Activated CD4-positive, alpha-beta T cell treated with anti-CD3 and anti-CD28 coated beads for 36 hours (primary cell): ENCODE measurements at regions of chr11 and their contacts with region 1.

Region 1: DNA sequence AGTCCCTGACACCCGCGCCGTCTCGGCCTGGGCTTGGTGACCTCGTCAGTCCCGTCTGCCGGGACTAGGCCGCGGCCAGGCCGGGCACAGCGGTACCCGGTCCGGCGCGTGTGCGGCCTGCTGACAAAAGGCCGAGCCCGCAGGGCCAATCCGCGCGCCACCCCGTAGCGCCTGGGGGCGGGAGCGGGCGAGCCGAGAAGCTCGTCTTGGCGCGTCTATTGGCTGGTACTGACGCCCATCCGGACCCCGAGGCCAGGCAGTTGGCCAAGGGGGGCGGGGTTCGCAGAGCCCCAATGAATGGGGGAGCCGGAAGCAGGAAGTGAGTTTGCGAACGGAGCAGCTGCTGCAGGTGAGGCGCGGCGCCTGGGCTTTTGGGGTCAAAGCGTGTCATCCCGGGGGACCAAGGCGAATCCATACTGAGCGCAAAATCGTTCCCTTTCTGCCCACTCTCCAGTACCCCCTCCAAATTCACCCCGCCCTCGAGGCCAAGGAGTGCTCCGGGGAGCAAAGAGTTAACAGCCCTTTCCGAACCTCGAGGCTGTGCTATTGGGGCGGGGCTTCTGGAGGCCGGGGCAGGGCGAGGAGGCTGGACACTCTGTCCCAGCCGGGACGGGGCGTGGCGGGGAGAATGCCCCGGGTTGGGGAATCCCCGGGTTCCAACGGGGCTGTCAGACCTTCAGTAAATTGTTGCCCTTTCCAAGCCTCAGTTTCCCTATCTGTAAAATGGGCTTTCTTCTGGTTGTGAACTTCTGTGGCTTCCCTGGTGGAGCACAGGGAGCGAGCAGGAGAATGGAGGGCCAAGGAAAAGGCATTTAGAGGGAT is at the start of gene DPP3:
- DNase-seq: peak; percentile 98
- ATAC-seq: peak; percentile 98
- H3K4me3 Mint-ChIP-seq: peak within 1 kb of the TSS; percentile 90
- H3K27ac Mint-ChIP-seq: peak within 1 kb of the TSS; percentile 86
- H3K4me1 Mint-ChIP-seq: peaks cover 22% of the 10 kb centered on the region
- H3K27me3 Mint-ChIP-seq: no peaks in the 10 kb centered on the region
- total RNA-seq, gene DPP3: 87.1 to 91.9 TPM

Region 2: DNA sequence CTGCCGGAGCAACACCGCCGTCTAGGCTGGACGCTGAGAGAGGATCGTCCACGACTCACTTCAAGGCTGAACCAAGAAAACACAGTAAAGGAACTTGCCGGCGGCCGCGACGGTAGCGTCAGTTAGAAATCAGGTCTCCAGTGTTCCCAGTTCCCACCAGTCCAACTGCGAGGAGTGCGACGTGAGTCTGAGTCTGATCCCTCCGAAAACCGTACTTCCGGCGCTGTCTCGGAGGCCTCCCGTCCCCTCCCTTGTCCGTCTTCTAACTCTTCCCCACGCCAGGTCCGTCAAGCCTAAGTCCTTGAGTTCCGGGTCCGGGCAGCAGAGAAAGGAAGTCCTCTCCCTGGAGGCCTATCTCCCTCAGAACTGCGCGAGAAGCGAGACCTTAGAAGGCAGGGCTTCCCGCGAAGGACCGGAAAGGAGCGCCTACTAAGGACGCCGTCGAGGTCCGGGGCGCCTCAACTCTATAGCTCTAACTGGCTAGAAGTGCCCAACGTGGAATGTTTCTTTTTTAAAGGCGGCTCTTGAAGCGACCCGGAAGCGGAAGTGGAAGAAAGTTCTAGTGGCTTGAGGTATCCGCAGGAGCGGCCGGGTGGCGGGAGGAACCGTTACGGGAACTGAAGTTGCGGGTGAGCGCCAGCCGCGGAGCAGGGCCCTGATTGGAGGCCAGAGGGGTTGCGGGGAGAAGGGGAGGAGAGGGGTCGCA is 478.2 kb before region 1 on chr11 and contains the starts of genes BANF1 and EIF1AD:
- CTCF ChIA-PET with region 1: no interaction called
- POLR2A ChIA-PET with region 1: no interaction called
- intact Hi-C with region 1: no loop called
- DNase-seq: peak; percentile 95
- ATAC-seq: peak; percentile 88
- H3K4me3 Mint-ChIP-seq: peak within 1 kb of the TSS; percentile 100
- H3K27ac Mint-ChIP-seq: peak within 1 kb of the TSS; percentile 98
- H3K4me1 Mint-ChIP-seq: peaks cover 36% of the 10 kb centered on the region
- H3K27me3 Mint-ChIP-seq: no peaks in the 10 kb centered on the region
- total RNA-seq, gene BANF1: 233 to 293 TPM
- total RNA-seq, gene EIF1AD: 45.1 to 52.2 TPM

Region 3: DNA sequence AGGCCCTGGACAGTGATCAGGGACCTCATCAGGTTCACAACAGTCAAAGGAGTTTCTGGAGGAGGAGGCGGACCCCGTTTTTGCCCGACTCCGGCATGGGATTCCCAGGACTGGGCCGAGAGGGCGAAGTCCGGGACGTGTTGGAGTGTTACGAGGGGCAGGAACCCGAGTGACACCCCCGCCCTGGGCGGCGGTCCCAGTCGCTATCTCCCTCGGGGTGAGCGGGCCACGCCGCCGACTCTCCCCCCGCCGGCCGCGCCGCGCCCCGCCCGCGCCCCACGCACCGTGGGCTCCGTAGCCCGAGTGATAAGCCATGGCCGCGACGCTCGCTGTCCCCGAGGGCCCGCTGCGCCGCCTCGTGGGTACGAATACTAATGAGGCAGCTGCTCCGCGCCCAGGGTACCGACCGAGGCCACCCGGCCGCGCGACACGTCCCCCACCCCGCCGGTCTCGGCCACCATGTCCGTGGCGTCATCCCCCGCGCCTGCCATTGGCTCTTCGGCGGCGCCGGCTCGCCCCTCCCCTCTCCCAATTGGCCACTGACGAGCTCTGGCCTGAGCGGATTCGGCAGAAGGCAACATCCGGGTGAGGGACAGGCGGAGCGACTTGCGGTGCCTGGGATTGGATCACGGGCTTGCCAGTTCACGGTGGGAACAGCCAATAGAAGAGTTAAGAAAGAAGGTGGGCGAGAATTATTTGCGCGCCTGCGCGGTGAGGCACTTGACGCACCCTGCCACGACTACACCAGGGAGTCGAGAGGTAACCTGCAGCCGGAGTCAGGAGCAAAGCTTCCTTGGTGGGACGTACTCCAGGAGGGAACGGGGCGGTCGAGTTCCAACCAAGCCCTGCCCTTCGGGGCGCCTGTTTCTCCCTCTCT is 191.4 kb before region 1 on chr11 and contains the start of gene YIF1A:
- CTCF ChIA-PET with region 1: no interaction called
- POLR2A ChIA-PET with region 1: no interaction called
- intact Hi-C with region 1: loop called in 1 of 2 experiments (anchors 1 kb)
- DNase-seq: peak; percentile 99
- ATAC-seq: peak; percentile 97
- H3K4me3 Mint-ChIP-seq: peak within 1 kb of the TSS; percentile 89
- H3K27ac Mint-ChIP-seq: peak within 1 kb of the TSS; percentile 85
- H3K4me1 Mint-ChIP-seq: peaks cover 22% of the 10 kb centered on the region
- H3K27me3 Mint-ChIP-seq: peaks cover 8% of the 10 kb centered on the region
- total RNA-seq, gene YIF1A: 47.5 to 49.8 TPM

Region 4: DNA sequence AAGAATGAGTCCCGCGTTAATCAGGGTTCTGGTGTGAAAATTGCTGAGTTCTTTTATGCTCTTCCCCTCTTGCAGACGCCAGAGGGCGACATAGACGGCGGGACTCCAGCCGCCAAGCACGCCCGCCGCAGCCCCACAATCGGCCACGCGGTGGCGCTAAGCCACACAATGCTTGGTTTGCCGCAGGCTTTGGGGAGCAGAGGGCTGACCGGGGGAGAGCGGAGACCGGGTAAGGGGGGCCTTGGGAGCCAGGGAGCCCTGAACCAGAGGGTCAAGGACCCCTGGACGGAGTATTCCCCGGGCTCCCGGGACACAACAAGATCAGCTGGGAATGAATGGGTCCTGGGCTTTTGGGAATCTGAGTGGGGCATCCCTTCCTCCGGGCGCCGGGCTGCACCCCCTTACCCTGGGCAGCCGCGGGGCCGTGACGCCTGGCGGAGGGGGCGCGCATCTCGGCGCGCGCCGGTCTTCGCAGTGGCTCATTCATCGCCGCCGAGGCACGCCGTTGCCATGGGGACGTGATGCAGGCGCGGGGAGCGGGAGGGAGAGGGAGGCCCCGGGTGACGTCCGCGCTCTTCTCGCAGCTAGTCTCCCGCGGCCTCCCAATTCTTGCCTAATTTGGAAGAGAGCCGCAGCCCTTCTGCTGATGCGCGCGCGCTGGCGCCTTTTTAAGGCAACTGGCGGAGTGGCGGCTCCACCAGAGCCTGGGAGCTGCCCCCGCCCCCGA is 71.7 kb before region 1 on chr11:
- CTCF ChIA-PET with region 1: interaction called, 5 read pairs
- POLR2A ChIA-PET with region 1: no interaction called
- intact Hi-C with region 1: loop called (anchors 1 kb)
- DNase-seq: peak; percentile 97
- ATAC-seq: peak; percentile 86
- H3K4me3 Mint-ChIP-seq: peak overlapping the region; percentile 67
- H3K27ac Mint-ChIP-seq: no peak overlapping the region
- H3K4me1 Mint-ChIP-seq: peaks cover 2% of the 10 kb centered on the region
- H3K27me3 Mint-ChIP-seq: peaks cover 20% of the 10 kb centered on the region

Region 5: DNA sequence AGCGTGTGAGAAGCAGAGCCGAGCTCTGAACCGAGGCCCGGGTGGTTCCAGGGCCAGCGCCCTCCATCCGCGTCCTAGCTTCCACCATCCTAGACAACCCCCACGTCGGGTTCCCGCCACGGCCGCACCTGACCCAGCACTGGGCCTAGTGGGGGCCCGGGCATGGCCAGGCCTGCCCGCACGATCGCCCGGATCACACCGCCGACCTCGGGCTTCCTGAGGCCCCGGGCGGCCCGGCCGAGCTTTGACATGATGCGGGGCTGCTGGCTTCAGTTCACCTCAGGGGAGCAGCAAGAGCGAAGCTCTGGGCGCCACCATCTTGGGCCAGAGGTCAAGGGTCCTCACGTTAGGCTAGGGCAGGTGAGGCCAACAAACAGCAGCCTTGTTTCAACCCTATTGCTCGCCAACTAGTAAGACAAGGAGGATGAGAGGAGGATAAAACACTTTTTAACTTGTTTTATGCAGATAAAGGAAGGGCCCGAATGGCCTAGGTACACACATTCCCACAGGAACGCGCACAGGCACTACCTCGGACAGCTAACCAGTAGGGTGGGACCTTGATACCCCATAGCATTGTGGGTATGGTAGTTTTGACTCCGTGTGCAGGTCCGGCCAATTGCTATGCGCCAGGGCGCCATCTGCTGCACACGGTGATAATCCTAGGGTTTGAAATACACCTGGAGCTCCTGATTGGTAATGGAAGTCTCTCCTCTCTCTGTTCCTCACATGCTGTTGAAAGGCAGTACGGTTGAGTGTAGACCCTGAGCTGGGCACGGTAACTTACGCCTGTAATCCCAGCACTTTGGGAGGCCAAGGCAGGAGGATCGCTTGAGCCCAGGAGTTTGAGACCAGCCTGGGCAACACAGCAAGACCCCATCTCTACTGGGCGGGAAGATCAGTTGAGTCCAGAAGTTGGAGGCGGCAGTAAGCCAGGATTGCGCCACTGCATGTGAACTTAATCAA is 41.5 kb before region 1 on chr11 and contains the start of gene MRPL11:
- CTCF ChIA-PET with region 1: interaction called, 3 read pairs
- POLR2A ChIA-PET with region 1: interaction called, 6 read pairs
- intact Hi-C with region 1: loop called (anchors 1 kb)
- DNase-seq: peak; percentile 94
- ATAC-seq: peak; percentile 99
- H3K4me3 Mint-ChIP-seq: peak within 1 kb of the TSS; percentile 85
- H3K27ac Mint-ChIP-seq: peak within 1 kb of the TSS; percentile 98
- H3K4me1 Mint-ChIP-seq: peaks cover 8% of the 10 kb centered on the region
- H3K27me3 Mint-ChIP-seq: no peaks in the 10 kb centered on the region
- total RNA-seq, gene MRPL11: 115 to 120 TPM

Region 6: DNA sequence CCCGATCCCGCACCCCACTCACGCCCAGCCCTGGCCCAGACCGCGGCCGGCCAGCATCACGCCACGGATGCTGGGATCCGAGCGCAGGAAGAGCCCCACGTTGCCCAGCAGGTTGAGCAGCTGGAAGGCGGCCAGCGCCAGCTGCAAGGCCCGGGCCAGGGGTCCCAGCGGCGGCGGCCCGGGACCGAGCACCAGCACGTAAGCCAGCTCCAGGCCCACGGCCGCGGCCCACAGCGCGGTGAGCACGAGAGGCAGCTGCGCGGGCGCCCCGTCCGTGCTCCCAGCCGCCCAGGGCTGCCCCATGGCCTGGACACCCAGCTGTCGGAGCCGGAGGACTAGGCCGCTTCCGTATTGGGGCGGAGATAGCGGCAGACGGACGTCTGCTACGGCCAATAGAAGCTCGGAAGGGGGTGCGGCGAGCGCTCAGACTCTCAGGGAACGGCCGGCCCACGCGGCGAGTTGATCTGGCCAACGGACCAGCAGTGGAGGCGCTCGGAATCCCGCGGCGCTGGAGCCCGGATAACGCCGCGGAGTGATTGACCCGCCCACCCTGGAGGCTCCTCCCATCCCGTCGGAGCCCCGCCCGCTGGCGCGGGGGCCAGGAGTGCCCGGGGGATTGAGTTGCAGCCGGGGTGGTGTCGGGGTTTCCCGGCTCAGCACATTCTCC is 65.5 kb after region 1 on chr11 and contains the start of gene ZDHHC24:
- CTCF ChIA-PET with region 1: interaction called, 5 read pairs
- POLR2A ChIA-PET with region 1: no interaction called
- intact Hi-C with region 1: loop called in 1 of 2 experiments (anchors 1 kb)
- DNase-seq: peak; percentile 95
- ATAC-seq: peak; percentile 94
- H3K4me3 Mint-ChIP-seq: peak within 1 kb of the TSS; percentile 76
- H3K27ac Mint-ChIP-seq: peak within 1 kb of the TSS; percentile 67
- H3K4me1 Mint-ChIP-seq: peaks cover 20% of the 10 kb centered on the region
- H3K27me3 Mint-ChIP-seq: peaks cover 5% of the 10 kb centered on the region
- total RNA-seq, gene ZDHHC24: 9.7 to 11.3 TPM

Region 7: DNA sequence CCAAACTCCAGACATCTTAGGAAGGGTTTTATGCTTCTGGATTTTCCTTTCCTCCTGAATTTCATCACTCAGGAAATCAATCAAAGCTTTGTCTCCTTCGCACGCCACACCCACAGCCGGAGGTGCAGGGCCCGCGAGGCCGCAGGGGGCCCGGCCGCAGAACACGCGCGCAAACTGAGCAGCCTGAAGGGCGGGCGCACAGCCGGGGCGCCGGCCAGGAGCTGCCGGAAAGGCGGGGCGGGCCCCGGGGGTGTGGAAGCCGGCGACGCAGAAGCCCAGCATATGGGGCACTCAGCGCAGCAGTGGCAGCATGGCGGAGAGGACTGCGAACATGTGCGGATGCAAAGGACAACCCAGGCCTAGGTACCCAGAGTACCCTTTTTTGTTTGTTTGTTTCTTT is 281.8 kb after region 1 on chr11:
- CTCF ChIA-PET with region 1: no interaction called
- POLR2A ChIA-PET with region 1: no interaction called
- intact Hi-C with region 1: no loop called
- DNase-seq: no peak
- ATAC-seq: no peak
- H3K4me3 Mint-ChIP-seq: no peak overlapping the region
- H3K27ac Mint-ChIP-seq: no peak overlapping the region
- H3K4me1 Mint-ChIP-seq: no peaks in the 10 kb centered on the region
- H3K27me3 Mint-ChIP-seq: no peaks in the 10 kb centered on the region

Region 8: DNA sequence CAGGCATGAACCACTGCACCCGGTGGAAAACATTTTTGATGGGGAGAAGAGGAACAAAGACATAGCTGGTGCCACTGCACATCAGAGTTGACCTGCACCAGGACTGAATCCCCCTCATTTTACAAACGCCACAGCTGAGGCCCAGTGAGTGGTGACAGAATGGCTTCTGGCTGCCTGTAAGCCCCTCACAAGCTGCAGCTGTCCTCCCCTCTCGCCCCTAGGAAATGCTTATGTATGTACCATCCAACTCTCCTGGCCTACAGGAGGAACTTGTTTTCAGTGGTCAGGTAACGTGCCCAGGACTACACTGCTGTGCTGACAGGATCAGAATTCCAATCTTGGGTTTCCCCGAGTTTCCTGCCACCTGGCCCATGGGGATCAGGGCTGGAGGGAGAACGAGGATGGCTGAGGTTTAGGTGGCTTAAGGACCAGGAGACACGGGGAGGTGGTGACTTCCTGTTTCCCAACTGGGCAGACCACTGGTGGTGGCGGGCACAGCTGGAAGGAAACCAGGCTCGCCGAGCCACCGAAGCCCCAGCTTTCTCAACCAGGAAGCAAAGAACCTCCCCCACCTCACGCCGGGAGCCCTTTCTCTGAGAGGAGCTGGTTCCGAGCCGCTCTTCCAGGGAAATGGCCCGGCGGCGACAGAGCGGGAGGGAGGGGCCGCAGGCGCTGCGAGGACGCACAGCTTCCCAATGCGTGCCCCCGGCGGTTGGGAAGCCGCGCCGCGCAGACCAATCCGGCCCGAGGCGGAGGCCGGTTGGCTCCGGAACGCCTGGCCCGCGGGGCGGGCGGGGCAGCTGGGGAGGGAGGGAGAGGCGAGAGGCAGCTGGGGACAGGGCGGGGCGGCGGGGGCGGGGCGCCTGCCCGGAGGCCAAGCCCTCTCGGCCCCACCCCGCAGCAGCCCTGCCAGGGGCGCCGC is 375.5 kb after region 1 on chr11:
- CTCF ChIA-PET with region 1: no interaction called
- POLR2A ChIA-PET with region 1: no interaction called
- intact Hi-C with region 1: loop called in 1 of 2 experiments (anchors 1 kb)
- DNase-seq: peak; percentile 94
- ATAC-seq: peak; percentile 83
- H3K4me3 Mint-ChIP-seq: peak overlapping the region; percentile 82
- H3K27ac Mint-ChIP-seq: peak overlapping the region; percentile 73
- H3K4me1 Mint-ChIP-seq: peaks cover 11% of the 10 kb centered on the region
- H3K27me3 Mint-ChIP-seq: no peaks in the 10 kb centered on the region

Region 9: GRCh38 chr11:67039989-67040546 is 559.7 kb after region 1 on chr11:
- CTCF ChIA-PET with region 1: no interaction called
- POLR2A ChIA-PET with region 1: no interaction called
- intact Hi-C with region 1: no loop called
- DNase-seq: no peak
- ATAC-seq: no peak
- H3K4me3 Mint-ChIP-seq: no peak overlapping the region
- H3K27ac Mint-ChIP-seq: no peak overlapping the region
- H3K4me1 Mint-ChIP-seq: no peaks in the 10 kb centered on the region
- H3K27me3 Mint-ChIP-seq: peaks cover 9% of the 10 kb centered on the region